Activated CD4-positive, alpha-beta memory T cell treated with anti-CD3 and anti-CD28 coated beads, Interleukin-2, amount 10 ng/mL, durations not matched to agents 7 days and 5 days (primary cell): ENCODE measurements at regions of chr3 and their contacts with region 1.

Region 1: DNA sequence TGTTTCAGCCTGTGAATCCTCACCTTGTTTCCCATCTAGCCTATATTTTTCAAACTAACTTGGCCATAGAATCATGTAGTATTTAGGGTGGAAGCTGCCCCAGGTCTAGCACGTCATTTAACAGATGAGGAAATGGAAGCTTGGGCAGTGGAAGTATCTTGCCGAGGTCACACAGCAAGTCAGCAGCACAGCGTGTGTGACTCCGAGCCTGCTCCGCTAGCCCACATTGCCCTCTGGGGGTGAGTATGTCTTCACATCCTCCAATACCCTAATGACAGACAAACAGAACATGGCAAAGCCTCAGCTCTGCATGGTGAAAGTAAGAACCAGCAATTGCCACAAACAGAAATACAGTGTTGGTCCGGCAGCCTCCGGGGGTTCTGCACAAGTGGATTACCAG is 2.2 kb upstream of the CCR5 start:
- DNase-seq: peak; percentile 86
- H3K4me3 Mint-ChIP-seq: peak overlapping the region; percentile 1
- H3K27ac Mint-ChIP-seq: peak overlapping the region; percentile 59
- H3K4me1 Mint-ChIP-seq: peaks cover 80% of the 10 kb centered on the region
- H3K27me3 Mint-ChIP-seq: peaks cover 10% of the 10 kb centered on the region

Region 2: GRCh38 chr3:45995236-45996192 is 373.1 kb before region 1 on chr3 and contains the start of gene FYCO1:
- CTCF ChIA-PET with region 1: interaction called, 4 read pairs
- POLR2A ChIA-PET with region 1: interaction called, 10 read pairs
- DNase-seq: peak; percentile 91
- H3K4me3 Mint-ChIP-seq: peak within 1 kb of the TSS; percentile 84
- H3K27ac Mint-ChIP-seq: peak within 1 kb of the TSS; percentile 93
- H3K4me1 Mint-ChIP-seq: peaks cover 46% of the 10 kb centered on the region
- H3K27me3 Mint-ChIP-seq: peaks cover 8% of the 10 kb centered on the region
- total RNA-seq, gene FYCO1: 21.7 to 22.6 TPM

Region 3: DNA sequence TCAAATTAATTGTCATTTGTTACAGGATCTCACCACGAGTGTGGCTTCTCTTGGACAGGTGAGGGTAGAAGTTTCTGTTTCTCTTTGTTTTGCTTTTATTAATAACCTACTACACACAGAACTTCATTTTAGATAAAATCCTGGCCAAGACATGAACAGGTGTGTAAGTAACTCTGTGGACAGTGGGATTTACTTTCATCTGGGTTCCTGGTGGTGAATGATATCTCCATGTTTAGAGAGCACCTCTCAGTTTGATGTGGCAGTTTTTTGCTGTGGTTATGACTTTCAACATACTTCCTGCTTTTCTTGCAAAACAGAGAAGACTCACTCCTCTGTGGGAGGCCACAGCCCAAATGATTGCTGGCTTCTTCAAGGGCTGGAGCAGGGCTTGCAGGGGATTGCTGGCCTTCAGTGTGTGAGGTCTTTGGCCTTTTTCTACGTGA is 270.2 kb before region 1 on chr3:
- CTCF ChIA-PET with region 1: interaction called, 63 read pairs
- POLR2A ChIA-PET with region 1: interaction called, 82 read pairs
- DNase-seq: peak; percentile 76
- H3K4me3 Mint-ChIP-seq: peak overlapping the region; percentile 52
- H3K27ac Mint-ChIP-seq: peak overlapping the region; percentile 96
- H3K4me1 Mint-ChIP-seq: peaks cover 70% of the 10 kb centered on the region
- H3K27me3 Mint-ChIP-seq: peaks cover 24% of the 10 kb centered on the region

Region 4: DNA sequence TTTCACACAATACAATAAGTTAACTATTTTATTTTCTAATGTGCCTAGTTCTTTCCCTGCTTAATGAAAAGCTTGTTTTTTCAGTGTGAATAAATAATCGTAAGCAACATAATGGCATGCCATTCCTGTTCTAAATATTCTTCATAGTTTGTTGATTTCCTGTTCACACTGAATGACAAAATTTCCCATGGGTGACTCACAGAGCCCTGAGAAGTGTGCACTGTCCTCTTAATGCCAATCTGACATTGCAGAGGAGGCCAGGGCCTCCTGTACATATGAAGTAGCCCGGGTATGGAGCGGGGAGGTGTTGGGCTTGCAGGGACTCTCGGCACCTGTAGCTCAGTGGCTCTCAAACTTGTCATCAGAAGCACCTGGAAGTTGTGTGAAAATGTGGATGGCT is 102.0 kb before region 1 on chr3:
- CTCF ChIA-PET with region 1: interaction called, 184 read pairs
- POLR2A ChIA-PET with region 1: interaction called, 60 read pairs
- DNase-seq: no peak
- H3K4me3 Mint-ChIP-seq: no peak overlapping the region
- H3K27ac Mint-ChIP-seq: no peak overlapping the region
- H3K4me1 Mint-ChIP-seq: peaks cover 60% of the 10 kb centered on the region
- H3K27me3 Mint-ChIP-seq: peaks cover 20% of the 10 kb centered on the region

Region 5: GRCh38 chr3:46312991-46313390 is 55.6 kb before region 1 on chr3:
- CTCF ChIA-PET with region 1: interaction called, 15 read pairs
- POLR2A ChIA-PET with region 1: interaction called, 10 read pairs
- DNase-seq: no peak
- H3K4me3 Mint-ChIP-seq: no peak overlapping the region
- H3K27ac Mint-ChIP-seq: no peak overlapping the region
- H3K4me1 Mint-ChIP-seq: peaks cover 20% of the 10 kb centered on the region
- H3K27me3 Mint-ChIP-seq: peaks cover 53% of the 10 kb centered on the region

Region 6: DNA sequence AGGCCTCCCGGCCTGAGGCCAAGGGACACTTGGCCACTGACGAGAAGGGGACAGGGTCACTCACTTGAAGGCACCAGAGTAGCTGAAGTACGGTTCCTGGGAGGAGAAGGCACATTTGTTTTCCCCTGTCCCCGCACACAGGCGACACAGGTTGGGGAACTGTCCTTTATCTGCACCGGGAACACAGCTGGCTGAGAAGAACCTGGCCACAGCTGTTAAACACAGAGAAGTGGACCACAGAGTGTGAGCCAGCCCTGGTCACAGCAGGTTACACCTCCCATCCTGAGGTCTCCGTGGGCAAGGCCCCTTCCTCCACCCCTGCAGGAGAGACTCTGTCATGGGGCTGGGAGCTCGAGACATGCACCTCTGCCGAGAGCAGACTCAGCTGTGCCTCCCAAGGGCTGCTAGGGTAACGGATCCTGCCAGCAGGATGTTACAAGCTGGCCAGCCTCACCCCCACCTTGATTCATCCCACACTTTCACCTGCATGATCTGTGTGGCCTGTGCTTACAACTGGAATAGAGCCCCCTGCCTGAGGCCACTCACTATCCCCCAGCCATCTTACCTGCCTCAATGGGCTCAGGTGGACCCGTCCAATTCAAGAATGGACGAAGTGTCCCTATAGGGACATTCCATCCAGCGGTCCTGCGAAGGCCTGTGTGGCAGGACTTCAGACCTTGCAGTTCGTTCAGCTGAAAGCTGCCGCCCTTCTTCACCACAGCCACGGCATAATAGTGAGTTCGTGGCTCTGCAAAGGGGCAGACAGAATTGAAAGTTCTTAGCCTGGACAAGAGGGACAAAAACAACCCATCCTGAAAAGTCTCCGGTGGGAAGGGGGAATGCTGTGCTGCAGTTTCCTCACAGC is 86.9 kb after region 1 on chr3:
- CTCF ChIA-PET with region 1: no interaction called
- POLR2A ChIA-PET with region 1: no interaction called
- DNase-seq: peak; percentile 9
- H3K4me3 Mint-ChIP-seq: no peak overlapping the region
- H3K27ac Mint-ChIP-seq: no peak overlapping the region
- H3K4me1 Mint-ChIP-seq: peaks cover 4% of the 10 kb centered on the region
- H3K27me3 Mint-ChIP-seq: peaks cover 39% of the 10 kb centered on the region

Region 7: DNA sequence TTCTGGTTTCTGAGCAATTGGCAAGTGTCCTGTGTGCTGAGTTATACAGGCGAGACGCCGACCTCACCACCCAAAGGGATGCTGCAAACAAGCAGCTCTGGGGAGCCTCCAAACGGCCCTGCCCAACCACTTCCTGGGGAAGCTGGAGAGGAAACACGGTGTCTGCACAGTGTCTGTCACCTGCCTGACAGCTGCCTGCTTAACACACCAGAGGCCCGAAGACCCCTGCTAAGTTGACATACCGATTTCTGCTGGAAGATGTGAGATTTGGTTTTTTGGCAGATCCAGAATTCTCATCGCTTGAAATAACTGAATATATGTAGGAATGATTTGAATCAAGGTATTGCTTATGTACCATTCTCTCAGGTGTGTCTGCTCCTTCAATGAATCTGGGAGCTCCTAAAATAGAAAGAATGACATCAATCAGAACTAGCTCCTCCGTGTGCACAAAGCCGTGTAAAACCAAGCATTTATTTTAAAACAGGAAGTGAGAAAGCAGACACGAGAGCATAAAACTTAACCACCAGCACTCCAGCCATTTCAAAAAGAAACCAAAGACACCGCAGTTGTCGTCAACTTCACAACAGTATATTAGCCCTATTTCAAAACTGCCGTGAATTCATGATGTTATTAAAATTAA is 170.4 kb after region 1 on chr3:
- CTCF ChIA-PET with region 1: interaction called, 5 read pairs
- POLR2A ChIA-PET with region 1: interaction called, 13 read pairs
- DNase-seq: peak; percentile 92
- H3K4me3 Mint-ChIP-seq: peak overlapping the region; percentile 57
- H3K27ac Mint-ChIP-seq: peak overlapping the region; percentile 83
- H3K4me1 Mint-ChIP-seq: peaks cover 73% of the 10 kb centered on the region
- H3K27me3 Mint-ChIP-seq: peaks cover 13% of the 10 kb centered on the region